Endothelial cell of umbilical vein (primary cell): ENCODE measurements at regions of chr20 and their contacts with region 1.

Region 1: DNA sequence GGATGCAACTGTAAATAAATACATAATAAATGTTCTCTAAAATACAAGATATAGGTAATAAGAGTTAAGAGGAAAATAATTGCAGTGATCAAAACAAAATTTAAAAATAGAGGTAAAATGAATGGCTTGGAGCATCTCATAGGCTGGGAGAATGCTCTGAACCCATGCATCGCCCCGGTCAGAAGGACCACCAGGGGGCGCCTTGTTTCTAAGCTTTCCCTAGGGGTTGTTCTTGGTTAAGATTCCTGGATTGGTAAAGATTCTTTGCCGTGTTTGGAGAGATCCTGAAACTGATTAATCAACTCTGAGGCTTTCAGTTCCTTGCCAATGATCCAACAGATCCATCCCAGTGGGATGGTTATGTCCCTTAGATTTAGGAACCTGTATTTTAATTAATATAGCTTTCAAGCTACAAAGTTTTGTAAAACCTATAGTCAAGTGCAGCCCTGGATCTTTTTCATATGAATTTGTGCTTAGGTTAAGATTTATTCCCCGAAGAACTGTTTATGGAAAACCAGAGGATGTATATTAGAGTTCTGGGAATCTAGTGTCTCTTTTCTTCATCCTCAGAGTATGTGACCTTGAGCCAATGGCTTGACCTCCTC is 45.3 kb upstream of the PRELID3B start:
- DNase-seq: peak; percentile 57
- H3K4me3 ChIP-seq: no peak overlapping the region
- H3K27ac ChIP-seq: no peak overlapping the region
- H3K4me1 ChIP-seq: no peaks in the 10 kb centered on the region
- H3K27me3 ChIP-seq: peaks cover 8 to 15% of the 10 kb centered on the region in 2 experiments
- CTCF ChIP-seq: peak; percentile 83 to 90
- POLR2A ChIP-seq: no peak

Region 2: GRCh38 chr20:58721951-58722778 is 365.8 kb before region 1 on chr20:
- CTCF ChIA-PET with region 1: no interaction called
- POLR2A ChIA-PET with region 1: no interaction called
- dilution Hi-C with region 1: no loop called
- intact Hi-C with region 1: loop called (anchors 10 kb)
- DNase-seq: no peak
- H3K4me3 ChIP-seq: no peak overlapping the region
- H3K27ac ChIP-seq: no peak overlapping the region
- H3K4me1 ChIP-seq: no peaks in the 10 kb centered on the region
- H3K27me3 ChIP-seq: peaks cover 4 to 6% of the 10 kb centered on the region in 2 experiments
- CTCF ChIP-seq: no peak
- POLR2A ChIP-seq: no peak

Region 3: DNA sequence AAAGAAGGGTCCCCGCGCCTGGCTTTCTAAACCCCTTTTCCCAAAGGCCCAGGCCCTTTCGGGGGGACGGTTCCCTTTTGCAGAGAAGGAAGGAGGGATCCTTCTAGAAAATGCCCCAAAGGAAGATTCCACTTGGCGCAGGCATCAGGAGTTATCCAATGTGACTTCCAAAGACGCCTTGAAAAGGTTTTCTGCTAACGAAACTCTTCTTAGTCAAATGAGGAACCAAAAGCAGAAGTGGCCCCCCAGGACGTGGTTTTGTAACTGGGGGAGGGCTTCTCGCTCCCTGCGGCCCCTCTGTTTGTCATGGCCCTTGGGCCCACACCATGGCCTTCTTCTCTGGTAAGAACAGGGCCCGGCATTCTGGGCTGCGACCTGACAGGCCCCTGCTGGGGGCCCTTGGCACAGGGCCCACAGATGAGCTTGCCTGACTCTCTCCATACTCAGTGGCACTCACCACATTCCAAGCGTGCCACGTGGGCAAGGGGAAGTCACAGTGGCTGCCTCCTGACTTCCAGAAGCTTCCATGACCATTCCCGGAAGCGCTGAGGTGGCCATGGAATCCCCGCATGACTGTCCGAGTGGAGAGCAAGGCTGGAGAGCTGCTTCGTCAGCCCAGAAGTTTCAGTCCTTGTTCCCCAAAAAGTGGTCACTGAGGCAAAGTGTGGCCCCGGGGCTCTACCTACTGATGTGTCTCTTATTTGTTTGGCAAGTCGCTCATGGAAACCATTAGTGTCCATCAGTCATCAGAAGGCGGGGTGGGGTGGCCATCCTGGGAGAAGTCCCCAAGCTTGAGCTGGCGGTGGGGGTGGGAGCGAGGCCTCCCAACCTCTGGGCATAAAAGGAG is 80.0 kb before region 1 on chr20:
- CTCF ChIA-PET with region 1: no interaction called
- POLR2A ChIA-PET with region 1: no interaction called
- dilution Hi-C with region 1: no loop called
- intact Hi-C with region 1: no loop called
- DNase-seq: no peak
- H3K4me3 ChIP-seq: no peak overlapping the region
- H3K27ac ChIP-seq: peak overlapping the region; percentile 41
- H3K4me1 ChIP-seq: peaks cover 41% of the 10 kb centered on the region
- H3K27me3 ChIP-seq: no peaks in the 10 kb centered on the region
- CTCF ChIP-seq: no peak
- POLR2A ChIP-seq: no peak

Region 4: DNA sequence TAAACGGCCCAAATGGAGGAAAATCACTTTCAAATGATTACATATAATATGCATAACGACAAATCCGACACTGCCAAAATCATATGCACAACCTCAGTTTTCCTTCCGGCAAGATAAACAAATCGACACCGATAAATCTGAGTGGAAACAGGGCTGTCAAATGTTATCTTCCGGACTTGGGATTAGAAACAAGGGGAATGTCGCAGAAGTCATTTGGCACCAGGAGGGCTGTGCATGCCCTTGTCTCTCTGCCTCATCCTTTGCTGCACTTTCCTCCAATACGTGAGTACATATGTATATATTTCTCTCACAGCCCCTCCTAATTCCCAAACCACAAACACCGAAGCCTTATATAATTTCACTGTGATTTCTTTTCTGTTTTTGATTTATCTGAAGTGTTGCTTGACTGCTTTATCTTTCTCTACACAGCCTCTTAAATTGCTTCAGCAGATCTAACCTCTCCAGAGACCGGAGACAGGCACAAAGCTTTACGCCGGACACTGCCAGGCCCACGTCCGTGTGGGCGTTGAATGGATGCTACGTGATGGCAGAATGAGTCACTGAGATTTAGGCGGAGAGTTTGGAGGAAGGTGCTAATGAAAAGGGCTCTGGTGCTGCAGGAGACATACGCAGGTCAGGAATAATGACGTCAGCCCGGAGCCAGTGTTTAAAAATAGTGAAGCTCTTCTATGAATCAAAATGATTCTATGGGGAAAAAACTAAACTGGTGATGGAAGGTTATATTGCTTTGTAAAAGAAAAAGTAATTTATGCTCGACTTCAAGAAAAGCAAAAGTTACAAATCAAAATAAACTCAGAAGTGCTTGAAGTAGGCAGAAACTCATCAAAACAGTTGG is 24.3 kb before region 1 on chr20:
- CTCF ChIA-PET with region 1: interaction called, 10 read pairs
- POLR2A ChIA-PET with region 1: no interaction called
- dilution Hi-C with region 1: no loop called
- intact Hi-C with region 1: no loop called
- DNase-seq: peak; percentile 68
- H3K4me3 ChIP-seq: peak overlapping the region in 2 of 3 experiments; percentile 15 to 35
- H3K27ac ChIP-seq: peak overlapping the region; percentile 36
- H3K4me1 ChIP-seq: peaks cover 14% of the 10 kb centered on the region
- H3K27me3 ChIP-seq: peaks cover 2 to 20% of the 10 kb centered on the region in 2 experiments
- CTCF ChIP-seq: no peak
- POLR2A ChIP-seq: no peak

Region 5: DNA sequence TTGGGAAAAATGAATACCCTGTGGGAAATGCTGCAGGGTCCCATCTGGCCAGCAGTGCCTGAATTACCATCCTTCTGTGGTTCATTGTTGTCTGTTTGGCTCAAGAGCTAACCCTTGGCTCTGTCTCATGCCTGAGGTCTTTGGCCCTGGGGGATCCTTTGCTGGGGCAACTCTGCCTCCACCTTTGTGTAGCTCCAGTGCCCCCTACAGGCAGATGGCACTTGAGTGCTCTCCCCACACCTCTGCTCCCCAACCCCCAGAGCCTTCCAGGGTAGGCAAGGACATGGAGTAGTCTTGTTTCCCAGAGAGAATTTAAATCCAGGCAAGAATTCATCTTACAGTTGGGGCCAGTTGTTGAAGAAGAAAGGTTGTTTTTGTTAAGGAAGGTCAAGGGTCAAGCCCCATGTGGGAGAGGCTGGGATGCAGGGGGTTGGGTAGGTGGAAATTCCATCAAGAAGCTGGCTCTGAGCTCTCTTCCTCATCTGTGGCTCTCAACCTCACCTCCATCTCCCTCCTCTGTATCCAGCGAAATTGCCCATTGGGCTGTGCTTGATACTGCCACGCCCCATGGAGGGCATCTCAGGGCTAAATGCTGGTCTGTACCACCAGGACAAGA is 119.9 kb after region 1 on chr20:
- CTCF ChIA-PET with region 1: interaction called, 14 read pairs
- POLR2A ChIA-PET with region 1: no interaction called
- dilution Hi-C with region 1: no loop called
- intact Hi-C with region 1: no loop called
- DNase-seq: peak; percentile 11
- H3K4me3 ChIP-seq: no peak overlapping the region
- H3K27ac ChIP-seq: no peak overlapping the region
- H3K4me1 ChIP-seq: no peaks in the 10 kb centered on the region
- H3K27me3 ChIP-seq: no peaks in the 10 kb centered on the region
- CTCF ChIP-seq: peak; percentile 25 to 37
- POLR2A ChIP-seq: no peak

Region 6: GRCh38 chr20:59403261-59403961 is 315.5 kb after region 1 on chr20:
- CTCF ChIA-PET with region 1: interaction called, 4 read pairs
- POLR2A ChIA-PET with region 1: no interaction called
- dilution Hi-C with region 1: no loop called
- intact Hi-C with region 1: loop called (anchors 1 kb)
- DNase-seq: peak; percentile 16
- H3K4me3 ChIP-seq: no peak overlapping the region
- H3K27ac ChIP-seq: no peak overlapping the region
- H3K4me1 ChIP-seq: no peaks in the 10 kb centered on the region
- H3K27me3 ChIP-seq: peaks cover 9 to 12% of the 10 kb centered on the region in 2 experiments
- CTCF ChIP-seq: peak; percentile 85 to 87
- POLR2A ChIP-seq: no peak

Region 7: GRCh38 chr20:59495894-59496510 is 408.1 kb after region 1 on chr20:
- CTCF ChIA-PET with region 1: interaction called, 34 read pairs
- POLR2A ChIA-PET with region 1: no interaction called
- dilution Hi-C with region 1: no loop called
- intact Hi-C with region 1: loop called (anchors 10 kb)
- DNase-seq: peak; percentile 56
- H3K4me3 ChIP-seq: no peak overlapping the region
- H3K27ac ChIP-seq: no peak overlapping the region
- H3K4me1 ChIP-seq: no peaks in the 10 kb centered on the region
- H3K27me3 ChIP-seq: no peaks in the 10 kb centered on the region
- CTCF ChIP-seq: peak; percentile 82 to 90
- POLR2A ChIP-seq: no peak